SK-N-SH (cell line): ENCODE measurements at regions of chr18 and their contacts with region 1.

Region 1: GRCh38 chr18:34867520-34867919 is 157.4 kb downstream of the DTNA start:
- DNase-seq: peak; percentile 57
- H3K4me3 ChIP-seq: no peak overlapping the region; a peak in 1 of 4 replicates
- H3K27ac ChIP-seq: no peak overlapping the region
- H3K4me1 ChIP-seq: peaks cover 0 to 4% of the 10 kb centered on the region in 2 experiments; a peak in 2 of 4 replicates
- H3K27me3 ChIP-seq: no peaks in the 10 kb centered on the region
- CTCF ChIP-seq: peak; percentile 39
- EP300 ChIP-seq: no peak
- RAD21 ChIP-seq: peak; percentile 29

Region 2: GRCh38 chr18:34562252-34562870 is 305.2 kb before region 1 on chr18:
- CTCF ChIA-PET with region 1: no interaction called
- POLR2A ChIA-PET with region 1: no interaction called
- DNase-seq: no peak
- H3K4me3 ChIP-seq: no peak overlapping the region
- H3K27ac ChIP-seq: no peak overlapping the region
- H3K4me1 ChIP-seq: no peaks in the 10 kb centered on the region; a peak in 1 of 4 replicates
- H3K27me3 ChIP-seq: no peaks in the 10 kb centered on the region
- CTCF ChIP-seq: no peak
- EP300 ChIP-seq: no peak
- RAD21 ChIP-seq: no peak

Region 3: DNA sequence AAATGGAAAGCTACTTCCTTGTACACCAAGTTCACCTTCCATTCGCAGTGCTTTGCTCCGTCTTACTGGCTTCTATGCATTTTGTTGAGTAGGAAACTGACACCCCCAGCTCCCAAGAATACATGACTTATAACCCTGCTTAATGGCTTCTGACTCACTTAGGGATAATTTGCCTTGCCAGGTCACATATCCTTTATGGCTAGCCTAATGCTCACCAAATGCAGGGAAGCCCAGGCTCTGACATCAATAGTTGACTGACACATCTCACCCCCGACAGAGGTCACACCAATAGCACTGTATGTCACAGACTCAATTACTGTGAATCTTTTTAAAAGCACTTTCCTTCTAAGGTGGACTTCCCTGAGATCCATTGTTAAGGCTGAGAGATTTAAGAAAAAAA is 10.2 kb before region 1 on chr18:
- CTCF ChIA-PET with region 1: interaction called, 12 read pairs
- POLR2A ChIA-PET with region 1: no interaction called
- DNase-seq: no peak
- H3K4me3 ChIP-seq: no peak overlapping the region
- H3K27ac ChIP-seq: no peak overlapping the region
- H3K4me1 ChIP-seq: no peaks in the 10 kb centered on the region
- H3K27me3 ChIP-seq: no peaks in the 10 kb centered on the region
- CTCF ChIP-seq: no peak
- EP300 ChIP-seq: no peak
- RAD21 ChIP-seq: no peak

Region 4: GRCh38 chr18:35050028-35050546 is 182.6 kb after region 1 on chr18:
- CTCF ChIA-PET with region 1: no interaction called
- POLR2A ChIA-PET with region 1: no interaction called
- DNase-seq: no peak
- H3K4me3 ChIP-seq: no peak overlapping the region; a peak in 1 of 4 replicates
- H3K27ac ChIP-seq: peak overlapping the region in 1 of 2 experiments; percentile 58; a peak in 2 of 4 replicates
- H3K4me1 ChIP-seq: peaks cover 7 to 26% of the 10 kb centered on the region in 2 experiments; a peak in 3 of 4 replicates
- H3K27me3 ChIP-seq: no peaks in the 10 kb centered on the region
- CTCF ChIP-seq: no peak
- EP300 ChIP-seq: no peak
- RAD21 ChIP-seq: no peak